Calu3 (cell line): ENCODE measurements at regions of chr9 and their contacts with region 1.

Region 1: DNA sequence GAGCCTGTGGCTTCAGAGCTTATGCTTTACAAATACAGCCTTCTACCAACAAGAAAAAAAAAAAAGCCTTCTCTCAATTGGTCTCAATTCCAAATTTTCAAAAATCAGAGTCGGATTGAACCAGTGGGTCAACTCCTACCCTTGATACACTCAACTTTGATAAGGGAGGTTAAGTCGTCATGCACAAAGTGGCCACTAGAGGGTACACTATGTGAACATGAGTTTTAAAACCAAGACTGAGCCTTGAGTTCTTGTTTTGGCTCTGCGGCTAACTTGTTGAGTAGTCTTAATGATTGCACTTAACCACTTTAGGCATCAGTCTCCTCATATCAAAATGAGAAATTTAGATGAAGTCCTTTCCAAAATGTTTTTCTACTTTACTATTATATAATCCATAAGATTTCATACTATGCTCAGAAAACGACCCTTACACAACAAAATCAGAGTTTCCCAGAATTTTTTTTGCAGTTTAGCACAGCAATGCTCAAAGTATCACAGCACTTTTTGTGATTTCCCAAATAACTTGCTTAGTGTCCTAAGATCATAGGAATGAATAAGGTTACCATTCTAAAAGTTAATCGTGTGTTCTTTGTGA is 92.9 kb upstream of the MTAP start:
- DNase-seq: peak; percentile 70
- H3K4me3 Mint-ChIP-seq: no peak overlapping the region
- H3K27ac Mint-ChIP-seq: peak overlapping the region; percentile 44
- H3K4me1 Mint-ChIP-seq: peaks cover 36% of the 10 kb centered on the region
- H3K27me3 Mint-ChIP-seq: no peaks in the 10 kb centered on the region
- CTCF ChIP-seq: peak; percentile 48

Region 2: GRCh38 chr9:21473236-21473635 is 236.3 kb before region 1 on chr9:
- CTCF ChIA-PET with region 1: no interaction called
- intact Hi-C with region 1: loop called (anchors 5 kb)
- DNase-seq: no peak
- H3K4me3 Mint-ChIP-seq: no peak overlapping the region
- H3K27ac Mint-ChIP-seq: no peak overlapping the region
- H3K4me1 Mint-ChIP-seq: no peaks in the 10 kb centered on the region
- H3K27me3 Mint-ChIP-seq: no peaks in the 10 kb centered on the region
- CTCF ChIP-seq: no peak